HEK293 (cell line): ENCODE measurements at regions of chr3 and their contacts with region 1.

Region 1: GRCh38 chr3:119322835-119323722 is 28.9 kb downstream of the ARHGAP31 start:
- H3K4me3 ChIP-seq: peak overlapping the region; percentile 49
- H3K27ac ChIP-seq: peak overlapping the region; percentile 69; the same call in 1 of the 2 replicates
- H3K4me1 ChIP-seq: no peaks in the 10 kb centered on the region
- CTCF ChIP-seq: peak; percentile 57; the same call in 1 of the 2 replicates

Region 2: GRCh38 chr3:119206611-119207511 is 116.2 kb before region 1 on chr3:
- CTCF ChIA-PET with region 1: no interaction called
- POLR2A ChIA-PET with region 1: no interaction called
- H3K4me3 ChIP-seq: no peak overlapping the region
- H3K27ac ChIP-seq: no peak overlapping the region
- H3K4me1 ChIP-seq: no peaks in the 10 kb centered on the region
- CTCF ChIP-seq: no peak

Region 3: DNA sequence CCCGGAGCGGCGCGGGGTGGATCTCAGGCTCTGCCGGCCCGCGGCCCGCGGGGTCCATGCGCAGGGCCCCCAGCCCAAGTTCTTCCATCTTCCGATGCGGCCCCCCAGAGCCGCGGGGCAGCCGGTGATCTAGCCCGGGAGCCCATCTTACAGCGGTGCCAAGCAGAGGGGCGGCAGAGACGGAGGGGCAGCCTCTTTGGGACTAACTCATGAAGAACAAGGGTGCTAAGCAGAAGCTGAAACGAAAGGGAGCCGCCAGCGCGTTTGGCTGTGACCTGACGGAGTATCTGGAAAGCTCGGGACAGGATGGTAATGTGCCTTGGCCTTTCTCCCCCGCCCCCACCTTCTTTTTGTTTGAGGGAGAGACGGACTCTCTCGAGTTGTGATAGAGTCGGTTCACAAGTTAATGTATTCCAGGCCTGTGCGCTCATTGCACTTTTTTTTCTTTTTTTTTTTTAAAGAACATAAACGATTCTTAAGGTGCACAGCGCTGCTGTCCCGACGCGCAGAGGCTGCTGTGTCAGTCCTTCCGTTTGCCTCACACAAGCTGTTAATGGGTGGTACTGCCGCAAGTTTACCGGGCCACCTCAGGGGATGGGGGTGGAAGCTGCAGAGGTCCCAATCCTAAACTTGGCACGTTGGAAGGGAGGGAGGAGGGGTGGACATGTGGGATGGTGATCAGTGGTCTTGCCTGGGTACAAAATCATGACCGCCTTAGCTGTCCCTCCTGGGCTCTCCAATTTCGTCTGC is 28.2 kb before region 1 on chr3:
- CTCF ChIA-PET with region 1: interaction called, 3 read pairs
- POLR2A ChIA-PET with region 1: interaction called, 10 read pairs
- H3K4me3 ChIP-seq: peak overlapping the region; percentile 66
- H3K27ac ChIP-seq: peak overlapping the region; percentile 79; the same call in 1 of the 2 replicates
- H3K4me1 ChIP-seq: no peaks in the 10 kb centered on the region
- CTCF ChIP-seq: no peak